Endothelial cell of umbilical vein (primary cell): ENCODE measurements at regions of chr2 and their contacts with region 1.

Region 1: DNA sequence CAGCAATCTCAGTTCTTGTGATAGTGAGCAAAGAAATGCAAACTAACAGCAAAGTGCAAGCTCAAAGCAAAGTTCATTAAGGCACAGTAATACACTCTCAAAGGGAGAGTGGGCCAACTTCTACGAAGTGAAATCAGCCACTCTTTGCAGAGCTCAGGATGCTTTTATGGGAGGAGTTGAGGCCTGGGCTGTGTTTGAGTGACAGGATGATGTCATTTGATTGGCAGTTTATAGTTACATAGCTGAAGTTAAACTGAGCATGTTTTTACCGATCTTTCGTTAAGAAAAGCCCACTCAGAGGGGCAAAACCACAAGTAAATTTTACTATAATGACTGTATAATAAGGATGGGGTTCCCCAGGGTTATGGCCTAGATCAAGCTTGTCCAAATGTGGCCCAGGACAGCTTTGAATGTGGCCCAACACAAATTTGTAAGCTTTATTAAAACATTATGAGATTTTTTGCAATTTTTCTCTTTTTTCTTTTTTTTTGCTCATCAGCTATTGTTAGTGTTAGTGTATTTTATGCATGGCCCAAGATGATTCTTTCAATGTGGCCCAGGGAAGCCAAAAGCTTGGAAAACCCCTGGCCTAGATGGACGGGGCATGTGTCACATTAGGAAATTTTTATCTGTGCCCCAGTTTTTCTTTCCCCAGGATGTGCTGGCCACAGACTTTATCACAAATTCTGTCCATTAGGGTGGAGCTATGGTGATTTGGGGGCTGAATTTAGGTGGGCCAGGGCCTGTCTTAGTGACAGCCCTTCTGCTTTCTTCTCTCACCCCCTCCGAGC is 8.3 kb upstream of the DNAH7 start:
- DNase-seq: no peak
- H3K4me3 ChIP-seq: no peak overlapping the region
- H3K27ac ChIP-seq: no peak overlapping the region
- H3K4me1 ChIP-seq: no peaks in the 10 kb centered on the region
- H3K27me3 ChIP-seq: peaks cover 7 to 12% of the 10 kb centered on the region in 2 experiments
- CTCF ChIP-seq: no peak
- POLR2A ChIP-seq: no peak

Region 2: GRCh38 chr2:196171248-196171871 is 94.4 kb after region 1 on chr2 and contains the start of gene STK17B:
- CTCF ChIA-PET with region 1: interaction called, 21 read pairs
- POLR2A ChIA-PET with region 1: no interaction called
- dilution Hi-C with region 1: no loop called
- intact Hi-C with region 1: loop called (anchors 1 kb)
- DNase-seq: peak; percentile 94
- H3K4me3 ChIP-seq: peak within 1 kb of the TSS; percentile 50 to 94 (median 83)
- H3K27ac ChIP-seq: peak within 1 kb of the TSS; percentile 69
- H3K4me1 ChIP-seq: peaks cover 36% of the 10 kb centered on the region
- H3K27me3 ChIP-seq: peaks cover 4 to 17% of the 10 kb centered on the region in 2 experiments
- CTCF ChIP-seq: peak; percentile 9 to 41
- POLR2A ChIP-seq: peak; percentile 98
- total RNA-seq, gene STK17B: 12.4 and 16.6 TPM in 2 replicates

Region 3: GRCh38 chr2:196213252-196213980 is 136.4 kb after region 1 on chr2:
- CTCF ChIA-PET with region 1: interaction called, 13 read pairs
- POLR2A ChIA-PET with region 1: no interaction called
- dilution Hi-C with region 1: no loop called
- intact Hi-C with region 1: no loop called
- DNase-seq: no peak
- H3K4me3 ChIP-seq: no peak overlapping the region
- H3K27ac ChIP-seq: no peak overlapping the region
- H3K4me1 ChIP-seq: no peaks in the 10 kb centered on the region
- H3K27me3 ChIP-seq: no peaks in the 10 kb centered on the region
- CTCF ChIP-seq: no peak
- POLR2A ChIP-seq: no peak

Region 4: DNA sequence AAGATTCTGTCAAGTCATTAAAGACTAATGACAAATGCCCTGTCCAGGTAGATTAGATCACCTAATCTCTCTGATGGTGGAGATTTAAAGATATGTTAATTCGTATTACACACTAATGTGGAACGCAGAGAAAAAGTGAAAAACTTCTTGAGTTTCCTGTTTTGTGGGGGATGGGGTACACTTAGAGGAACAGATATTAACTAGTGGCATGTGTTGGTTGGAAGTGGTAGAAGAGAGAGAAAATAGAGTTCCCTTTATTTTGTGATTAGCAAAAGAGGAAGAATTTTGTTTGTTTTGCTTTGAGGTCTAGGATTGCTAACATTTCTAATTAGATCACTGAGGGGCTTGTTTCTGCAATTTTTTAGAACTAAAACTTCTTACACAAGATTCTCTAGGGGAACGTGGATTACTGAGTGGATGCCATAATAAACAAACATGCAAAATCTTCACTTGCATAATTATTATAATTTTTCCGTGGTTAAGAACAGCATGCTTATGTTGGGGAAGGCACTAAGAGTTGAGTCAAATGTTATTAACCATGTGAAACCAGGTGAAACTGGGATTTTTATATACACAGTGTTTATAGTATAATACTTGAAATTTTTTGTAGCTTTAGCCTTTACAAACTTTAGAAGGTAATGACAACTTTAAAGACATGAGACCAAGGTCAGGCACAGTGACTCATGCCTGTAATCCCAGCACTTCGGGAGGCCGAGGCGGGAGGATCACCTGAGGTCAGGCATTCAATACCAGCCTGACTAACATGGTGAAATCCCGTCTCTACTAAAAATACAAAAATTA is 191.8 kb after region 1 on chr2:
- CTCF ChIA-PET with region 1: interaction called, 10 read pairs
- POLR2A ChIA-PET with region 1: no interaction called
- dilution Hi-C with region 1: no loop called
- intact Hi-C with region 1: no loop called
- DNase-seq: no peak
- H3K4me3 ChIP-seq: no peak overlapping the region
- H3K27ac ChIP-seq: peak overlapping the region; percentile 71
- H3K4me1 ChIP-seq: peaks cover 54% of the 10 kb centered on the region
- H3K27me3 ChIP-seq: no peaks in the 10 kb centered on the region
- CTCF ChIP-seq: no peak
- POLR2A ChIP-seq: no peak

Region 5: DNA sequence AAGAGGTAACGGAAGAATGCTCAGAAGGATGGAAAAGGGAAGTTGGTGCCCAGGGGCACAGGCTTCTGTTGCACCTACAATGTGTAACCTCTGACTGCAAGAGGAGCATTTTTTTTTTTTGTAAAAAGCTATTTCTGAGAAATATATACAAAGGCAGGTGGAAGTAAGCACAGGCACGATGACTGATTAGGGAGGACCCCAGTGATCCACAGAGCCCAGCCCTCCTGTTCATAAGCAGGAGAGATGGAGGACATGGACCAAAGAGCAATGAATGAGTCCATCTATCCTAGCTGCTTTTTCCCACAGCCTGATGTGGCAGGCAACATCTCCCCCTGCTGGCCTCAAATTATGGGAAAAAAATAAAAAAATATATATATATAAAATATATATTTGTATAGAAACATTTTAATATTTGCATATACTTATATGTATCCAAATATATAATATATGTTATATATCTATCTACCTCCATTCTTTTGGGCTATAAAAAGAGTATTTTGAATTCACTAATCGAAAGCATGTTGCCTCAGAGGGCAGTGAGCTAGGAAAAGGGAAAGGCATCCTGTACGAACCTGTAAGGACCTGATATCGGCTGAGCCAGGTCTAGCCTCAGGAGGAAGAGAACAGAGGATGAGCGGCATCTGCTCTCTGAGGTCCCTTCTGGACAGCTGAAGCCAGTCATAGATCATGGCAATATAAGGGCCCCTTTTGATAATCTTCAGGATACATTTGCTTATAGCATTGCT is 260.4 kb after region 1 on chr2:
- CTCF ChIA-PET with region 1: interaction called, 93 read pairs
- POLR2A ChIA-PET with region 1: no interaction called
- dilution Hi-C with region 1: no loop called
- intact Hi-C with region 1: loop called (anchors 2 kb)
- DNase-seq: peak; percentile 43
- H3K4me3 ChIP-seq: no peak overlapping the region
- H3K27ac ChIP-seq: no peak overlapping the region
- H3K4me1 ChIP-seq: peaks cover 29% of the 10 kb centered on the region
- H3K27me3 ChIP-seq: no peaks in the 10 kb centered on the region
- CTCF ChIP-seq: peak; percentile 26 to 40
- POLR2A ChIP-seq: no peak

Region 6: GRCh38 chr2:196758474-196759377 is 681.8 kb after region 1 on chr2:
- CTCF ChIA-PET with region 1: interaction called, 9 read pairs
- POLR2A ChIA-PET with region 1: no interaction called
- dilution Hi-C with region 1: no loop called
- intact Hi-C with region 1: loop called (anchors 2 kb)
- DNase-seq: peak; percentile 40
- H3K4me3 ChIP-seq: no peak overlapping the region
- H3K27ac ChIP-seq: no peak overlapping the region
- H3K4me1 ChIP-seq: no peaks in the 10 kb centered on the region
- H3K27me3 ChIP-seq: no peaks in the 10 kb centered on the region
- CTCF ChIP-seq: peak in 1 of 2 donors; percentile 26
- POLR2A ChIP-seq: no peak